ENCODE measurements at regions of chr4 and their contacts with region 1.

Region 1: GRCh38 chr4:145618932-145619638 is at the start of gene MMAA:
- DNase-seq: peak; percentile 91
- ATAC-seq: peak; percentile 95
- H3K4me3 ChIP-seq: peak within 1 kb of the TSS; percentile 65
- H3K27ac ChIP-seq: peak within 1 kb of the TSS; percentile 93
- H3K4me1 ChIP-seq: no peaks in the 10 kb centered on the region; the same call in 1 of the 2 replicates
- H3K27me3 ChIP-seq: no peaks in the 10 kb centered on the region
- CTCF ChIP-seq: peak; percentile 70
- POLR2A ChIP-seq: peak; percentile 90
- RAD21 ChIP-seq: peak; percentile 46
- total RNA-seq, gene MMAA: 5.2 and 7.8 TPM in 2 replicates

Region 2: DNA sequence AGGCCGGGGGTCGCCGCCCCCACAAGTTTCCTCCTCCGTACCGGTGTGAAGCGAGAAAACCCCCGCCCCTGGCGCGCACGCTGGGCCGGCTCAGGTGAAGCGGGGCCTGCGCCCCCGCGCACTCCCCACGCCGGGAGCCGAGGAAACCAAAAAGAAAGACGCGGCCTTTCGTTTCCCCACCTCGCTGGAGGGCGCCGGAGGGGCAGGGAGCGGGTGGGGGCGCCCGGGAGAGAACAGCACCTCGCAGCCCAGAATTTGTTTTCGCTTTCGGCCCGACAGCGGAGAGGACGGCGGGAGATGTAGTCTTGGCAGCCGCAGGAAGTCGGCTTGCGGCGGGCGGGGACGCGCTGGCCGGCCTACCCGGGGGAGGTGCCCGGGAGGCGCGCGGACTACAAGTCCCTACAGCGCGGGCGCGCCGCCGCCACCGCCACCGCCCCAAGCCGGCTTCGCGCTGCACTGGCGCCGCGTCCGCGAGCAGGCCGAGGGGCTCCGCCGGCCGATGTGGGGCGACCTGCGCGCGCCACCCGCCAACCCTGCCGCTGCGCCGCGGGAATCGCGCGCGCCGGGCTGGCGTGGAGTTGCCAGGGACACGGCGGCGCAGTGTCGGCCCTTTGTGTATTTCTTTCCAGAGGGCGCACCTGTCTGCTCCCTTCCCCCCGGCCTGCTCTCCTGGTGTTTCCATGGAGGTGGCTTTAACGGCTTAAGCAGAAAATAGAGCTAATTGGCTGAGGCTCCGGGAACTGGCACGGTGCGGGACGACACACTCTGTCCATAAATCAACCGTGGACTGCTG is 438.6 kb before region 1 on chr4 and contains the start of gene OTUD4:
- CTCF ChIA-PET with region 1: interaction called, 3 read pairs
- POLR2A ChIA-PET with region 1: no interaction called
- dilution Hi-C with region 1: no loop called
- in situ Hi-C with region 1: no loop called
- intact Hi-C with region 1: loop called (anchors 1 kb)
- DNase-seq: peak; percentile 94
- ATAC-seq: peak; percentile 88
- H3K4me3 ChIP-seq: peak within 1 kb of the TSS; percentile 77
- H3K27ac ChIP-seq: peak within 1 kb of the TSS; percentile 88
- H3K4me1 ChIP-seq: no peaks in the 10 kb centered on the region; the same call in 1 of the 2 replicates
- H3K27me3 ChIP-seq: no peaks in the 10 kb centered on the region
- CTCF ChIP-seq: peak; percentile 22; the same call in 1 of the 2 replicates
- POLR2A ChIP-seq: no peak
- RAD21 ChIP-seq: no peak
- total RNA-seq, gene OTUD4: 12.4 and 16.9 TPM in 2 replicates

Region 3: DNA sequence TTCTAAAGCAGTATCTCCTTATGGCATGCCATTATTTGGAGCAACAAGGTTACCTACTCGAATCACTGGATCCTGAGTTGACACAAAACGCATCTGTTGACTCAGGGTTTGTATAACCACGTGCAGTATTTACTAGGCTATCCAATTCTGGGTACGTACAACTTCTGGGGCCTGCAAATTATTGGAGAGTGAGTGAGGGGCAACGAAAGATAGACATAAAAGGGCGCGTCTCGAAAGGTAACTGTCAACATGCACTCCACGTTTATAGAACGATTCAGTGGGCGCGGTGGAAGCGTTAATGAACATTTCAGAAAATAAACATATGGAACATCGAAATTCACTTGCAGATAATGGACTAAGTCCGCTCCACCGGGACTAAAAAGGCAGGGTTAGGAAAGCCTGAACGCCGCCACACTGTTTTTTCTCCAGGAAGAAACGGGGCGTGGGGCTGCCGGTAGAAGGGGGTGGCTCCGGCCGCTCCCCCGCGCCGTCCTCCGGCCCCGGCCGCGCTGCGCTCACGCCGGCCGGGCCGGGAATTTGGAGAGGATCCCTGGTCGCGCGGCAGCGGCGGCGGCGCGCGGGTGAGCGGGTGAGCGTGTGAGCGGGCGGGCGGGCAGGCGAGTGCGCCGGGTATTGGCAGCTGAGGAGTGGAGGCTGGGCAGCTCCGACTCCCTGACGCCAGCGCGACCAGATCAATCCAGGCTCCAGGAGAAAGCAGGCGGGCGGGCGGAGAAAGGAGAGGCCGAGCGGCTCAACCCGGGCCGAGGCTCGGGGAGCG is 137.7 kb before region 1 on chr4 and contains the start of gene SMAD1:
- CTCF ChIA-PET with region 1: no interaction called
- POLR2A ChIA-PET with region 1: no interaction called
- dilution Hi-C with region 1: no loop called
- in situ Hi-C with region 1: no loop called
- intact Hi-C with region 1: loop called (anchors 5 kb)
- DNase-seq: peak; percentile 82
- ATAC-seq: peak; percentile 89
- H3K4me3 ChIP-seq: peak within 1 kb of the TSS; percentile 56
- H3K27ac ChIP-seq: peak within 1 kb of the TSS; percentile 83
- H3K4me1 ChIP-seq: peaks cover 2% of the 10 kb centered on the region; the same call in 1 of the 2 replicates
- H3K27me3 ChIP-seq: no peaks in the 10 kb centered on the region
- CTCF ChIP-seq: no peak
- POLR2A ChIP-seq: peak; percentile 57; the same call in 1 of the 2 replicates
- RAD21 ChIP-seq: no peak
- total RNA-seq, gene SMAD1: 17.6 and 20.8 TPM in 2 replicates

Region 4: GRCh38 chr4:145808021-145808650 is 189.1 kb after region 1 on chr4:
- CTCF ChIA-PET with region 1: no interaction called
- POLR2A ChIA-PET with region 1: no interaction called
- dilution Hi-C with region 1: no loop called
- in situ Hi-C with region 1: no loop called
- intact Hi-C with region 1: loop called (anchors 2 kb)
- DNase-seq: peak; percentile 98
- ATAC-seq: peak; percentile 79
- H3K4me3 ChIP-seq: no peak overlapping the region
- H3K27ac ChIP-seq: peak overlapping the region; percentile 85
- H3K4me1 ChIP-seq: peaks cover 8% of the 10 kb centered on the region
- H3K27me3 ChIP-seq: no peaks in the 10 kb centered on the region
- CTCF ChIP-seq: no peak
- POLR2A ChIP-seq: no peak
- RAD21 ChIP-seq: no peak

Region 5: DNA sequence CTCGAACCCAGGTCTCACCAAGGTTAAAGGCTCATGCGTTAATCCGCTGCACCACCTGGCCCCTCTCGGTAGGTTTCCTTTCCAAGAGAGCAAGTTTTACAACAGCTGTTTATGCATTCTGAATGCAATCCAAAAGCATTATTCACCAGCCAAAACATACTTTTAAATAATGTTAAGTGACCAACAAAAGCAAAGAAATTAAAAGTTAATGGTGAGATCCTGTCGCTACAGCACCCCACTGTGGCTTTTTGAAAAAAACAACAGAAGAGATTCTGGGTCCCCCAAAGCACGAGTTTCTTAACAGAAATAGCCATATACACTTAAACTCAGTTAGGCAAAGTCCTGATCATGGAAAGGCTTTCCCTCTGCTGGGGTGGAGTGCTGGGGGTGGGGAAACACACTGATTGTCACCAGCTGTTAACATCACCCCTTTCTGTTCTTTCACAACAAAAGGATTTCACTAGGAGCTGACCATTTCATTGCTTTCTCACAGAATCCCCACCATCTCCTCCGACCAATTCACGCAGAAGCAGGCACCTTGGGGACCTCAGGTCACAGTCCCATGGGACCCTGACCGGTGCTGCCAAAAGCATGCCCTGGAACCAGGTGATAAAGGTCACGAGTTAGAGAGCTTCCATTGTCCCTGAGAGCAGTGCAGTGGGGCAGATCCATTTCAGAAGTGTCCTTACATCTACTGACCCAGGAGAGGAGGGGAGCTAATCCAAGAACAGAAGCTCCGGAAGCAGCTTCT is 268.3 kb after region 1 on chr4:
- CTCF ChIA-PET with region 1: interaction called, 3 read pairs
- POLR2A ChIA-PET with region 1: no interaction called
- dilution Hi-C with region 1: no loop called
- in situ Hi-C with region 1: no loop called
- intact Hi-C with region 1: loop called (anchors 2 kb)
- DNase-seq: peak; percentile 75
- ATAC-seq: peak; percentile 82
- H3K4me3 ChIP-seq: no peak overlapping the region
- H3K27ac ChIP-seq: peak overlapping the region; percentile 56; the same call in 1 of the 2 replicates
- H3K4me1 ChIP-seq: peaks cover 6% of the 10 kb centered on the region
- H3K27me3 ChIP-seq: no peaks in the 10 kb centered on the region
- CTCF ChIP-seq: peak; percentile 36
- POLR2A ChIP-seq: no peak
- RAD21 ChIP-seq: peak; percentile 45

Region 6: GRCh38 chr4:146051728-146052391 is 432.8 kb after region 1 on chr4:
- CTCF ChIA-PET with region 1: no interaction called
- POLR2A ChIA-PET with region 1: no interaction called
- dilution Hi-C with region 1: no loop called
- in situ Hi-C with region 1: no loop called
- intact Hi-C with region 1: loop called (anchors 2 kb)
- DNase-seq: peak; percentile 72
- ATAC-seq: peak; percentile 84
- H3K4me3 ChIP-seq: no peak overlapping the region
- H3K27ac ChIP-seq: no peak overlapping the region
- H3K4me1 ChIP-seq: peaks cover 17% of the 10 kb centered on the region
- H3K27me3 ChIP-seq: no peaks in the 10 kb centered on the region
- CTCF ChIP-seq: no peak
- POLR2A ChIP-seq: no peak
- RAD21 ChIP-seq: no peak